ENCODE measurements at regions of chr12 and their contacts with region 1.

Region 1: GRCh38 chr12:124680863-124681778 is 113.7 kb upstream of the NCOR2 start:
- DNase-seq: peak; percentile 60 to 69
- ATAC-seq: peak in 7 of 8 donors; percentile 41 to 86 (median 72)
- H3K4me3 ChIP-seq: no peak overlapping the region
- H3K27ac ChIP-seq: peak overlapping the region; percentile 11 to 91 (median 78)
- H3K4me1 ChIP-seq: peaks cover 27 to 82% (median 61%) of the 10 kb centered on the region in 9 donors
- H3K27me3 ChIP-seq: no peaks in the 10 kb centered on the region
- CTCF ChIP-seq: peak in 7 of 9 donors; percentile 19 to 50 (median 40)

Region 2: GRCh38 chr12:124388679-124389536 is 292.2 kb before region 1 on chr12:
- intact Hi-C with region 1: loop called in 1 of 10 experiments (anchors 10 kb)
- DNase-seq: peak; percentile 86 to 89
- ATAC-seq: peak; percentile 53 to 71 (median 60)
- H3K4me3 ChIP-seq: peak overlapping the region; percentile 41 to 74 (median 59)
- H3K27ac ChIP-seq: peak overlapping the region; percentile 88 to 99 (median 97)
- H3K4me1 ChIP-seq: peaks cover 61 to 100% (median 89%) of the 10 kb centered on the region in 9 donors
- H3K27me3 ChIP-seq: no peaks in the 10 kb centered on the region
- CTCF ChIP-seq: peak in 3 of 9 donors; percentile 8 to 32 (median 25)

Region 3: GRCh38 chr12:124625867-124626675 is 55.0 kb before region 1 on chr12:
- intact Hi-C with region 1: loop called in 1 of 10 experiments (anchors 2 kb)
- DNase-seq: peak; percentile 91
- ATAC-seq: peak; percentile 84 to 97 (median 92)
- H3K4me3 ChIP-seq: peak overlapping the region in 1 of 10 donors; percentile 24
- H3K27ac ChIP-seq: peak overlapping the region; percentile 65 to 95 (median 83)
- H3K4me1 ChIP-seq: peaks cover 13 to 64% (median 41%) of the 10 kb centered on the region in 9 donors
- H3K27me3 ChIP-seq: no peaks in the 10 kb centered on the region
- CTCF ChIP-seq: no peak

Region 4: GRCh38 chr12:124734224-124734788 is 53.2 kb after region 1 on chr12:
- intact Hi-C with region 1: loop called in 1 of 10 experiments (anchors 5 kb)
- DNase-seq: no peak
- ATAC-seq: peak in 7 of 8 donors; percentile 9 to 46 (median 35)
- H3K4me3 ChIP-seq: no peak overlapping the region
- H3K27ac ChIP-seq: peak overlapping the region in 7 of 10 donors; percentile 14 to 87 (median 48)
- H3K4me1 ChIP-seq: peaks cover 0 to 60% (median 23%) of the 10 kb centered on the region in 9 donors
- H3K27me3 ChIP-seq: no peaks in the 10 kb centered on the region
- CTCF ChIP-seq: no peak

Region 5: DNA sequence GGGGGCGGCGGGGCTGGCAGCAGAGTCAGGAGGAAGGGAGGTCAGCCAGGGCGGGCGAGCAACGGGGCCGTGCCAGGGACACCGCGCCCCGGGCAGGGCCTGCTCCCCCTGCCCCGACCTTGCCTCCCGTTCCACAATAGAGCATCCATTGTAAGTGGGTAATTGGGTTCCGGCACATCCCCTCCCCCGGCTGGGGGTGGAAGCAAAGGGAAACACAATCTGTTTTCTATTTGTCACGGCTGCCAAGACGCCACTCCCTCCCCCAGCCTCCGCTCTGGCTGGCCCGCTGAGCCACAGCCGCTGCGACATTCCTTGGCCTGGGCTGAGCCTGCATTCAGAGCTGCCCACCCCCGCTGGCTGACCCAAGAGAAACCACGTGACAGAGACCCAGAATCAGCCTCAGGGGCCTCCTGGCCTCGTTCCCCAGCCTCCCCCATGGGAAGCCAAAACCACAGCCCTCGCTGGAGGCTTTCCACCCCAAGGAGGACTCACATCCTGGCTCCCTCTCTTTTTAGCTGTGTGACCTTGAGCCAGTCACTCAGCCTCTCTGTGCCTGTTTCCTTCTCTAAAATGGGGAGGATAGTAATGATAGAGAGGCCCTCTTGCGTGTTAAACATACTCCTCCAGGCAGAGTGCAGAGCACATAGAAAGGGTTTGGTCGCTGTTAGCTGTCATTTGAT is 64.9 kb after region 1 on chr12:
- intact Hi-C with region 1: loop called in 1 of 10 experiments (anchors 5 kb)
- DNase-seq: peak; percentile 92 to 95
- ATAC-seq: peak; percentile 95 to 97 (median 96)
- H3K4me3 ChIP-seq: peak overlapping the region in 5 of 10 donors; percentile 4 to 24 (median 7)
- H3K27ac ChIP-seq: peak overlapping the region; percentile 59 to 91 (median 88)
- H3K4me1 ChIP-seq: peaks cover 6 to 42% (median 22%) of the 10 kb centered on the region in 9 donors
- H3K27me3 ChIP-seq: no peaks in the 10 kb centered on the region
- CTCF ChIP-seq: no peak

Region 6: GRCh38 chr12:124754949-124755800 is 74.1 kb after region 1 on chr12:
- intact Hi-C with region 1: loop called in 4 of 10 experiments (anchors 5 kb)
- DNase-seq: peak; percentile 83 to 87
- ATAC-seq: peak; percentile 89 to 95 (median 93)
- H3K4me3 ChIP-seq: no peak overlapping the region
- H3K27ac ChIP-seq: peak overlapping the region; percentile 77 to 91 (median 84)
- H3K4me1 ChIP-seq: peaks cover 23 to 62% (median 49%) of the 10 kb centered on the region in 9 donors
- H3K27me3 ChIP-seq: no peaks in the 10 kb centered on the region
- CTCF ChIP-seq: no peak